PC-9 (cell line): ENCODE measurements at regions of chr18 and their contacts with region 1.

Region 1: GRCh38 chr18:31101183-31102024 is 817 bp downstream of the DSC2 start:
- DNase-seq: peak in 1 of 2 experiments; percentile 50
- H3K4me3 ChIP-seq: peak overlapping the region; percentile 70
- H3K27ac ChIP-seq: peak overlapping the region; percentile 75
- H3K4me1 ChIP-seq: peaks cover 45% of the 10 kb centered on the region
- H3K27me3 ChIP-seq: no peaks in the 10 kb centered on the region
- CTCF ChIP-seq: no peak

Region 2: DNA sequence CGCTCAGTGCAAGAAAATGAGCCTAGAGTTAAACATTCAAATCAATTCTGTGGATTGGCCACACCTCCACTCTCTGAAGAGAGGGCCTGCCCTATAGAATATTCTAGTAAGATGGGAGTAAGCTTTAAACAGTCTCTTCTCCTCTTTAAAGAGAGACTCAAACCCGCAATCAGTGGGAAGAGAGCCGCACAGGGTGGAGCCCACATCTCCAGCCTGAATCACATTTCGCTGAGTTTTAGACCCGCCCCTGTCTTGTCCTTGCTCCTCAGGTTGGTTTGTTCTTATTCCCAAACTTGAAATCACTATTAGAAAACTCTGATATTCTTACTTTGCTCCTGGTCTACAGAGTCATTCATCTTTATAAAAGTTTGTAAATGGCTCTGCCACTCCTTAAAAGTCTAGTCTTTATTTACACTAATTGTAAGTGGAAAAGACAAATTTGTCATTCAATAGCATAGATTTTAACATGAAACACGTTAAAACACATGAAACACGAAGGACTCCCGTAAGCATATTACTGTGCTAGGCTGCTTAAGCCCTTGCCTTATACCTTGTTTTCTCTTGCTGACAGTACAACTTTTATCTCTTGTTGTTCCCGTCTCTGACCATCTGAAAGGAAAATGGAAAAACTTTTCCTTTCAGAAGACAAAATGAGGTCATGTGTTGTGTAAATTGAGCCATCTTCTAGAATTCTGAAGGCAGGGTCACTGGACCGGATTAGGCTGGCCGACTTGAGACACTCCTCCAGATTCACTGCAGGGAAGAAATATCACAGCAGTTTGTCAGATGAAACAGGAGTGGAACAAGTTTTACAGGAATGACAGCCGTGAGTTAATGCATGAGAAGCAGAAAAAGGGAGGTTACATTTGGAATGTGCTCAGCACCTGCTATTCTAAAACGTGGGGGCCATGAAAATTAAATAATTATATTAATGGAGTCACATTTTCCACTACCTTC is 55.7 kb after region 1 on chr18:
- CTCF ChIA-PET with region 1: no interaction called
- POLR2A ChIA-PET with region 1: no interaction called
- intact Hi-C with region 1: loop called (anchors 5 kb)
- DNase-seq: peak; percentile 51 to 86
- H3K4me3 ChIP-seq: 0 out of 2 replicates have a peak overlapping the region, but pooled peaks have one; percentile 28
- H3K27ac ChIP-seq: peak overlapping the region; percentile 35
- H3K4me1 ChIP-seq: peaks cover 10% of the 10 kb centered on the region; the same call in 1 of the 2 replicates
- H3K27me3 ChIP-seq: no peaks in the 10 kb centered on the region
- CTCF ChIP-seq: no peak

Region 3: DNA sequence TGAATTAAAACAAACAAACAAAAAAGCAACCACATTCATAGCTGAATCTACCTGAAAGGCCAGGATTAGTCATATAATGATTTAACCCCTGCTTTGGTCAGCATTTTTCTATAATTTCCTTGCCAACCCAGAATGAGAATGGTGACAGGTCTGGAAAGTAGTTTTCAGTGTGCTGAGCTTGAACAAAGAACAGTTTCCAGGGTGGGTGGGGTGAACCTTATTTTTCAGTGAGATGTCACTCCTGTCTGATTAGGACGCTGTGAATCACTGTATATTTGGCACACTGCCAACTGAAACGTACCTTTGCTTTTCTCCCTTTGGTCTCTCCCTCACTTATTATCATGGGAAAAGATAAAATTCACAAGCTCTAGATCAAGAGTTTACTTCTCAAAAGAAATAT is 96.3 kb after region 1 on chr18:
- CTCF ChIA-PET with region 1: no interaction called
- POLR2A ChIA-PET with region 1: interaction called, 10 read pairs
- intact Hi-C with region 1: loop called (anchors 2 kb)
- DNase-seq: peak in 1 of 2 experiments; percentile 50
- H3K4me3 ChIP-seq: no peak overlapping the region
- H3K27ac ChIP-seq: no peak overlapping the region
- H3K4me1 ChIP-seq: peaks cover 29% of the 10 kb centered on the region
- H3K27me3 ChIP-seq: no peaks in the 10 kb centered on the region
- CTCF ChIP-seq: no peak

Region 4: DNA sequence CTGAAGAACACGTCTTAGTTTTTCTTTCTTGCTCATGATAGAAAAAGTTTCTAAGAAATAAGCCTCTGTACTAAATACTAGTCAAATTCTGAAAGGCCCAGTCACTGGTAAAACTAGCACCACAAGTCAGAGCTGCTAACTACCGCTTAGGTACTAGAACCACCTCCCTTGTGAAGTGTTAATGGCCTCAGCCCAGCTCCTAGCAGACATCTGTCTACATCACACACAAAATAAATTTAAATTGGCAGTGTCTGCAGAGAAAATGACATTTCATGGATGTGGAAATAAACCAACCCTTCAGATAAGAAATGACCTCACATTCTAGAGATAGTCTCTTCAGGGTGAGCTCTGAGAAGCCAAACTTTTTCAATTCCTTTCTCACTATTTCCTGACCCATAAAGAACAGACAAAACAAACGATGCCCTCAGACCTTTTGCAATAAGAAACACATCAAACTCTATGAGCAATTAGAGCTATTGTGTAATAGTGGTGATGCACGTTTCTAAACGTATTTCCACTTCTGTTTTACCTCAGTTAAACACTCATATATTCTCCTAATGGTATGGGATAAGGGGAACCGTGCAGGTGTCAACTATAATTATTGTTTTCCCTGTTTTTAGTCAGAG is 146.3 kb after region 1 on chr18:
- CTCF ChIA-PET with region 1: no interaction called
- POLR2A ChIA-PET with region 1: interaction called, 12 read pairs
- intact Hi-C with region 1: loop called (anchors 5 kb)
- DNase-seq: peak in 1 of 2 experiments; percentile 35
- H3K4me3 ChIP-seq: no peak overlapping the region
- H3K27ac ChIP-seq: no peak overlapping the region
- H3K4me1 ChIP-seq: peaks cover 41% of the 10 kb centered on the region
- H3K27me3 ChIP-seq: no peaks in the 10 kb centered on the region
- CTCF ChIP-seq: no peak